Right ventricle myocardium inferior (tissue), 1 donor: ENCODE measurements at regions of chr19 and their contacts with region 1.

Region 1: DNA sequence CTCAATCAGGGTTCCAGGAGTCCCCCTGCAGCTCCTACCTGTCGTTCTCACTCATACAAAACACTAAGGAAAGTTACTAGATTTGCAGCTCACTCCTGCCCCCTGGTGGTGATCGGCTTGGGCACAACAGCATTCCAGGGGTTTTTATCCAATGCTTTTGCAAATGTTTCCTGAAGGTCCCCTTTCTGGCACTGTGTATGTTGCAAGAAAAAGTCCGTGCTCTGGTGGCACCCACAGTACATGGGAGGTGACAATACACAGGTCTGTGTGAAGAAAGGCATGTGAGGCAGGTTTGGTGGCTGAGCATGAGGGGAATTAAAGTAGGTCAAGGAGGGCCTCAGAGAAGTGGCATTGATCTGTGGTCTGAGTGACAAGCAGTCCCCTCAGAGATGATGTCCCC is 8.6 kb upstream of the TYK2 start:
- DNase-seq: peak; percentile 79
- ATAC-seq: peak; percentile 62

Region 2: GRCh38 chr19:10112895-10113591 is 275.9 kb before region 1 on chr19:
- intact Hi-C with region 1: loop called (anchors 10 kb)
- DNase-seq: no peak
- ATAC-seq: peak; percentile 17

Region 3: DNA sequence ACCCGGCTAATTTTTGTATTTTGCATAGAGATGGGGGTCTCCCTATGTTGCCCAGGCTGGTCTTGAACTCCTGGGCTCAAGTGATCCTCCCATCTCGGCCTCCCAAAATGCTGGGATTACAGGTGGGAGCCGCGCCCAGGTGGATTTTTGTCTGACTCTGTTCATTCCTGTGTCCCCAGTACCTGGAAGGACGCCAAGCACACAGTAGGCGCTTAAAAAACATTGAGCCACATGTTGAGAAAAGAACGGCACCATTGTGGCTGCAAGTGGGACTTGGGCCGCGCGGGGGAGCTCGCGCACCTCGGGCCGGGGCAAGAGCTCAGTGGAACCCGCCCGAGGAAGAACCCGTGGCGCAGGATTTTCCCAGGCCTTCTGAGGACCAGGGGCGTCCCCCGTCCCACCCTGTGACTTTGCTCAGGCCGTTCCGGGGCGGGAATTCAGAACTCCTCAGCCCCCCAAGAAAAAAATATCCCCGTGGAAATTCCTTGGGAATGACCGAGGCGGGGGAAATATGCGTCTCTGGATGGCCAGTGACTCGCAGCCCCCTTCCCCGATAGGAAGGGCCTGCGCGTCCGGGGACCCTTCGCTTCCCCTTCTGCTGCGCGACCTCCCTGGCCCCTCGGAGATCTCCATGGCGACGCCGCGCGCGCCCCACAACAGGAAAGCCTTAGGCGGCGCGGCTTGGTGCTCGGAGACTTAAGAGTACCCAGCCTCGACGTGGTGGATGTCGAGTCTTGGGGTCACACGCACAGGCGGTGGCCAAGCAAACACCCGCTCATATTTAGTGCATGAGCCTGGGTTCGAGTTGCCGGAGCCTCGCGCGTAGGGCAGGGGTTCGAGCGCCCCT is 119.4 kb before region 1 on chr19:
- intact Hi-C with region 1: loop called (anchors 1 kb)
- DNase-seq: peak; percentile 94
- ATAC-seq: peak; percentile 84

Region 4: DNA sequence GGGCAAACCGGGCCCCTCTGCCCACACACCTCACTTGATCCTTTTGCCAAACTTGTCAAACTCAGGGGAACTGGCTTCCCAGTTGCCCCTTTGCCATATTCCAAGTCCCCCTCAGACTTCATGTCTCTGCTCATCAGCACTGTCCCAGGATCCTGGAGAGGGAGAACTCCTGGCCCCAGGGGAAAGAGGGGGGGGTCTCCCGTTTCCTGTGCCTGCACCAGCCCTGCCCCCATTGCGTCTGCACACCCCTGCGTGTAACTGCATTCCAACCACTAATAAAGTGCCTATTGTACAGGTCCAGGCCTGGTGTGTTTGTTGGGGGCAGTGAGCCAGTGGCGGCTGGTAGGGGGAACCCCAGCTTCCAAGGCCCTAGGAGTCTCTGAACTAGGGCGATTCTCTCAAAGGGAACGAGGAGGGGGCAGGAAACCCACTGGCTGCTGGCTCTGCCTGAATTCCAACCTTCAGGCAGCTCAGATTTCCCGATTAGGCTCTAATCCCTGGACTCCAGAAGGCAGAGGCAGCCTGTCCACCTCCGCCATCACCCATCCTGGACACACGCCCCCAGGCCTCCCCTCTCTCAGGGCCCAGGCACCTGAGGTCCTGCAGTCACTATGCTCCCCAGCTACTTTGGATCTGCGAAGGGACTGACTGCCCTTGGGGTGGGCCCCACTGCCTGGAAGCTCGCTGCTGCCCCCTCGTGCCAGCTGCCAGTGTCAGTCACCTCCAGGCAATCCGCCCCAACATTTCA is 255.5 kb after region 1 on chr19:
- intact Hi-C with region 1: no loop called
- DNase-seq: peak; percentile 89
- ATAC-seq: peak; percentile 89